IMR-90 (cell line): ENCODE measurements at regions of chr6 and their contacts with region 1.

Region 1: GRCh38 chr6:24710519-24711303 is 8.2 kb downstream of the C6orf62 start:
- DNase-seq: no peak
- ATAC-seq: no peak
- H3K4me3 ChIP-seq: no peak overlapping the region
- H3K27ac ChIP-seq: no peak overlapping the region
- H3K4me1 ChIP-seq: no peaks in the 10 kb centered on the region; the same call in 1 of the 2 replicates
- H3K27me3 ChIP-seq: no peaks in the 10 kb centered on the region
- CTCF ChIP-seq: no peak
- POLR2A ChIP-seq: no peak
- RAD21 ChIP-seq: no peak

Region 2: DNA sequence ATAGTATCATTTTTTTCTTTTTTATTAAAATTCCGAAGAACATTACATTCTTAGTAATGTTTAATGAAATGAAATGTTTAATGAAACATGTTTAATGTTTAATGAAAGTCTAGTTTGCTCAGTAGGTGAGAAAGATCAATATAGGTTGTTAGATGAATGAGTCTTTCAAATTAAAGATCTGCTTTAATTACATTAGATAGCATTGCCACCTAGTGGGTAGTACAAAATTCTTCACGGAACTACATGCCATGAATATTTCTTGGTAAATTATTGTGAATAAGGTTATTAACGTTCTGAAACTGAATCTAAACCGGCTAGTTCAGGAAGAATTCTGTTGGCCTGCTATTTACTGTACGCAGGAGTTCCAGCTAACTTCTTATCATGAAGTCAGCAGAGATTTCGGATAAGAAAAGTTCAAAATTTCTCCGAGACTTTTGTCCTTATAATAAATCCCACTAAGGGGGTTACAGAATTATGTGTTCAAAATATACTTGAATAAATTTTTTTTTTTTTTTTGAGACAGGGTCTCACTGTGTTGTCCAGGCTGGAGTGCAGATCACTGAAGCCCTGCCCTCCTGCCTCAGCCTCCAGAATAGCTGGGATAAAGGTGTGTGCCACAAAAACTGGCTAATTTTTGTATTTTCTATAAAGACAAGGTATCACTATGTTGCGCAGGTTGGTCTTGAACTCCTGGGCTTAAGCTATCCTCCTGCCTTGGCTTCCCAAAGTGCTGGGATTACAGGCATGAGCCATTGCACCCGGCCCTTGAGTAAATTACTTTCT is 56.2 kb after region 1 on chr6:
- CTCF ChIA-PET with region 1: interaction called, 6 read pairs
- POLR2A ChIA-PET with region 1: no interaction called
- dilution Hi-C with region 1: no loop called
- in situ Hi-C with region 1: loop called (anchors 5 kb)
- intact Hi-C with region 1: no loop called
- DNase-seq: peak; percentile 49
- ATAC-seq: peak; percentile 75
- H3K4me3 ChIP-seq: no peak overlapping the region
- H3K27ac ChIP-seq: no peak overlapping the region
- H3K4me1 ChIP-seq: peaks cover 2% of the 10 kb centered on the region; the same call in 1 of the 2 replicates
- H3K27me3 ChIP-seq: no peaks in the 10 kb centered on the region
- CTCF ChIP-seq: peak; percentile 68
- POLR2A ChIP-seq: no peak
- RAD21 ChIP-seq: peak; percentile 73